ENCODE measurements at regions of chr2 and their contacts with region 1.

Region 1: GRCh38 chr2:191677646-191678436 is at the start of gene NABP1:
- DNase-seq: peak; percentile 83
- H3K4me3 ChIP-seq: peak within 1 kb of the TSS; percentile 85
- CTCF ChIP-seq: no peak

Region 2: GRCh38 chr2:191376981-191377629 is 300.7 kb before region 1 on chr2:
- CTCF ChIA-PET with region 1: no interaction called
- POLR2A ChIA-PET with region 1: no interaction called
- DNase-seq: peak; percentile 70
- H3K4me3 ChIP-seq: no peak overlapping the region
- CTCF ChIP-seq: no peak

Region 3: DNA sequence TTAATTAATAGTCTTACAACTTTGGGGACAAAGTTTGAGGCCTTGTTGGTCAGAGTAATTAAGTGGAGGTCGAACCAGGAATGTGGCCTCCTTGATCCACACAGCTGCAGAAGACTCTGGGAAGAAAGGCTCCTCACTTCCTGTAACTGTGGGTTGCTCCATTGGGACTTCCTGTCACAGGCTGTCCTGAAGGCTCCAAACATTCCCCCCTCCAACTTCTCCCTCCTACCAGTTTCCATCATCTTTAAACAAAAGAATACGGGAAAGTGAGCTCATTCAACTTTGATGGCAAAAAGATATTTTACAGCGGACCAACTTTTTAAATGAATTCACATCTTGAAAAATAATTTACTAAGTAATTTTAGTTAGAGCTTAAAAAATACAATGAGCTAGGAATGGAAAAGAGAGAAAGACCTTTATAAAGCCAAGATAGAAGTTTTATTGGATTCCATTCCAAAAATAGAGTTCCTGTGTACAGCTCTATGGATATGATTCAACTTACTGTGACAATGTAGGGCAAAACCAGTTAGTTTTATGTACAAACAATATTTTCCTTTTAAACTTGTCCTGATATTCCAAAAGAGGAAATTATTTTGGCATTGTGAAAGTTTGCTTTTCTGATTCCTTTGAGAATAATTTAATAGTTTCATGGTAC is 211.9 kb before region 1 on chr2:
- CTCF ChIA-PET with region 1: no interaction called
- POLR2A ChIA-PET with region 1: no interaction called
- DNase-seq: no peak
- H3K4me3 ChIP-seq: no peak overlapping the region
- CTCF ChIP-seq: no peak

Region 4: DNA sequence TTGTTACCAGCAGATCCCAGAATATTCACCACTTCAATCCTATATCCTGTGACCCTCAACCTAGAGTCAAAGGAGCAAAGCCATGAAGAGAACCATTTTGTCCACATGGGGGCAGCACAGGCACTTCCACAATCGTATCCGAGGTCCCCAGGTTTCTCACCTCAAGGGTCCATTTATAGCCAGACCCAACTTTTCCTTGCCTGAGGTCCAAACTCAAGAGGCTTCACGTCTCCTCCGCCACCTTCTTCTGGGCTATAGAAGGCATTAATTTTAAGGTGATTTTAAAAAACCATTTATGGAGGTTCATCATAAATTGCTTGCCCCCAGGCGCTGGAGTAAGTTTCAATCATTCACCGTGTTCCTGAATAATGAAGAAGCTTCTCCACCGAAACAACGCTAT is 111.5 kb before region 1 on chr2:
- CTCF ChIA-PET with region 1: interaction called, 44 read pairs
- POLR2A ChIA-PET with region 1: interaction called, 16 read pairs
- DNase-seq: no peak
- H3K4me3 ChIP-seq: no peak overlapping the region
- CTCF ChIP-seq: peak; percentile 81

Region 5: DNA sequence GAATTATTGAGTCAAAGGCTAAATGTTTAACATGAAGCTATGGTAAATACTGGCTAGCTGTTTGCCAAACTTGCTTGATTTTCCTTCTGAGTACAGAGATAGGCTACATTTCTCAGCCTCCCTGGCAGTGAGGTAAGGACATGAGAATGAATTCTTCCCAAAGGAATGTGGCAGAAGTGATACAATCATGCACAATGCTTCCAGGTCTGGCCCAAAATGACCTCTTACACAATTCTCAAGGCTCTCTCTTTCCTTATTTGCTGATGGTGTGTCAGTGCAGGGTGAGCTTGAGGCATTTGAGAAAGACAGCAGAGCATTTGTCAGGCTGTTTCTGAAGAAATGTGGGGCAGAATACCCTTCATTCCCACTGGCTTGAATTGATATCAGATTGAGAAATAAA is 95.5 kb before region 1 on chr2:
- CTCF ChIA-PET with region 1: no interaction called
- POLR2A ChIA-PET with region 1: interaction called, 16 read pairs
- DNase-seq: peak; percentile 81
- H3K4me3 ChIP-seq: no peak overlapping the region
- CTCF ChIP-seq: no peak

Region 6: GRCh38 chr2:191611614-191612013 is 66.2 kb before region 1 on chr2:
- CTCF ChIA-PET with region 1: no interaction called
- POLR2A ChIA-PET with region 1: interaction called, 10 read pairs
- DNase-seq: no peak
- H3K4me3 ChIP-seq: no peak overlapping the region
- CTCF ChIP-seq: no peak

Region 7: GRCh38 chr2:191637182-191638078 is 40.4 kb before region 1 on chr2:
- CTCF ChIA-PET with region 1: no interaction called
- POLR2A ChIA-PET with region 1: interaction called, 34 read pairs
- DNase-seq: no peak
- H3K4me3 ChIP-seq: no peak overlapping the region
- CTCF ChIP-seq: no peak

Region 8: GRCh38 chr2:191666732-191667131 is 11.1 kb before region 1 on chr2:
- CTCF ChIA-PET with region 1: interaction called, 13 read pairs
- POLR2A ChIA-PET with region 1: interaction called, 9 read pairs
- DNase-seq: no peak
- H3K4me3 ChIP-seq: no peak overlapping the region
- CTCF ChIP-seq: no peak

Region 9: GRCh38 chr2:191691016-191691735 is 13.3 kb after region 1 on chr2:
- CTCF ChIA-PET with region 1: interaction called, 13 read pairs
- POLR2A ChIA-PET with region 1: interaction called, 18 read pairs
- DNase-seq: peak; percentile 60
- H3K4me3 ChIP-seq: no peak overlapping the region
- CTCF ChIP-seq: peak; percentile 73

Measured in AG04449 (cell line).